BJ (cell line): ENCODE measurements at regions of chr5 and their contacts with region 1.

Region 1: GRCh38 chr5:122515709-122516431 is 203.8 kb downstream of the SNCAIP start:
- DNase-seq: peak; percentile 14
- H3K4me3 ChIP-seq: no peak overlapping the region
- H3K27me3 ChIP-seq: no peaks in the 10 kb centered on the region
- CTCF ChIP-seq: peak; percentile 76

Region 2: DNA sequence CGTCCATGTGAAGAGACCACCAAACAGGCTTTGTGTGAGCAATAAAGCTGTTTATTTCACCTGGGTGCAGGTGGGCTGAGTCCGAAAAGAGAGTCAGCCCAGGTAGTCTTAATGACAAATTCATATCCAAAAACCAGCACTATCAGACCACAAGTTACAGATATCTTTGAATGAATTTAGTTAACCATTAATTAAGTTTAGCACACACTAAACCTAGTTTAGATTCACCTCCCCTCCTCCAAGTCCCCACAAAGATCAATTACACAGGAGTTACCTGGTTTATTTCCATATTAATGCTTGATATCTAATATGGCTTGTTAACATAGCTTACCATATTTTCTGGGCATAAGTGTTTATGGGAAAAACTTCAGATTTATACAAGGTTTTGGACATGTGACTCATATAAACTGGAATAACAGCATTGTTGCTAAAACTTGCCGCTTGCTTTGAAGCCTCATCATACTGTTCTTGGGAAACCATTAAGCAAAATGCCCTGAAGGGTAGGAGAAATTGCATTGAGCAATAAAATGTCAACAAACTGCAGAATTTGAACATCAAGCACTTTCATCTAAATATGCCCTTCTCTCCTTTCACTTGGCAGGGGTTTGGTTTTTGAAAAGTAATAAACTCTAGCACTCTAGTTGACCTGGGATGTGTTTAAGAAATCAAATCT is 37.0 kb before region 1 on chr5:
- CTCF ChIA-PET with region 1: no interaction called
- POLR2A ChIA-PET with region 1: no interaction called
- DNase-seq: peak; percentile 57
- H3K4me3 ChIP-seq: no peak overlapping the region
- H3K27me3 ChIP-seq: no peaks in the 10 kb centered on the region
- CTCF ChIP-seq: no peak

Region 3: GRCh38 chr5:122545986-122546385 is 30.1 kb after region 1 on chr5:
- CTCF ChIA-PET with region 1: no interaction called
- POLR2A ChIA-PET with region 1: no interaction called
- DNase-seq: no peak
- H3K4me3 ChIP-seq: no peak overlapping the region
- H3K27me3 ChIP-seq: no peaks in the 10 kb centered on the region
- CTCF ChIP-seq: no peak

Region 4: GRCh38 chr5:123359454-123360200 is 843.8 kb after region 1 on chr5:
- CTCF ChIA-PET with region 1: interaction called, 11 read pairs
- POLR2A ChIA-PET with region 1: no interaction called
- DNase-seq: no peak
- H3K4me3 ChIP-seq: no peak overlapping the region
- H3K27me3 ChIP-seq: no peaks in the 10 kb centered on the region
- CTCF ChIP-seq: no peak

Region 5: GRCh38 chr5:123367739-123368138 is 851.9 kb after region 1 on chr5:
- CTCF ChIA-PET with region 1: interaction called, 12 read pairs
- POLR2A ChIA-PET with region 1: no interaction called
- DNase-seq: no peak
- H3K4me3 ChIP-seq: no peak overlapping the region
- H3K27me3 ChIP-seq: no peaks in the 10 kb centered on the region
- CTCF ChIP-seq: peak; percentile 41